ENCODE measurements at regions of chr6 and their contacts with region 1.

Region 1: DNA sequence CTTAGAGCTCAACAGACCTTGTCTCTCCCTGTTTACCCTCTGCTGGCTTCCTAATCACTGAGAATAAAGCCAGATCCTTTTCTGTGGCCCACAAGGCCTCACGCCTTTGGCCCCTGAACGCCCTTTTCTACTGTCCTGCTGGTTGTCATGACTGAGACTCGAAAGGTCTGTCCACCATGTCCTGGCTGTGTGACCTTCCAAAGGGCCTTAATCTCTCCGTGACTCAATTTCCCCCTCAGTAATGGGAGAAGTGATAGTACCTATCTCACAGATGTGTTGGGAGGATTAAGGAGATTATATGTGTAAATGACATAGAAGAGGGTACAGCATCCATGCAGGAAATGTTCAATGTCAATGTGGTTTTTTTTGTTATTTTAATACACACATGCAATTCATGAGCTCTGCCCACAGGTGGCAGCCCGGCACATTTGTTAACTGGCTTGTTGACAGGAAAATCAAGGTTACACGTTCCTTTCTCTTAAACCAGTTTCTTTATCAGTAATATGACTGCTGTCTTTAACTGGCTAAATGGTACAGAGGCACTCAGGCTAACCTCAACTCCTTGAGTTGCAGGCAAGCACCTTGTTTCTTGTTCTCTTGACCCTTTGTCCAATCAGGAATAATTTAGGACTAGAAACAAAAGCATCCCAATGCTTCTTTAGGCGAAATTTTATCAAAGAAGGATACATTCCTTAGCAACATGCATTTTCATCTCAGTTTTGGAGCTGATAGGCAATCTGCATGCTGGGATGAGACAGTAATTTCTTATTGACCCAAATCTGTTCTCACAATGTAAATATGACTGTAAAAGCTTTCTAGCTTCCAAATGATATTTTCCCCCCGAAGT is 16.6 kb downstream of the SLC22A1 start:
- DNase-seq: peak; percentile 89
- H3K4me3 Mint-ChIP-seq: no peak overlapping the region
- H3K27ac Mint-ChIP-seq: peak overlapping the region; percentile 35
- H3K4me1 Mint-ChIP-seq: peaks cover 15% of the 10 kb centered on the region
- H3K27me3 Mint-ChIP-seq: no peaks in the 10 kb centered on the region

Region 2: GRCh38 chr6:160455541-160456213 is 317.5 kb after region 1 on chr6:
- intact Hi-C with region 1: loop called (anchors 1 kb)
- DNase-seq: peak; percentile 92
- H3K4me3 Mint-ChIP-seq: no peak overlapping the region
- H3K27ac Mint-ChIP-seq: no peak overlapping the region
- H3K4me1 Mint-ChIP-seq: peaks cover 26% of the 10 kb centered on the region
- H3K27me3 Mint-ChIP-seq: peaks cover 43% of the 10 kb centered on the region

Measured in activated CD4-positive, alpha-beta T cell treated with anti-CD3 and anti-CD28 coated beads, Interleukin-2, amount 10 ng/mL, durations not matched to agents 24 days and 14 days (primary cell).